ENCODE measurements at regions of chr14 and their contacts with region 1.

Region 1: GRCh38 chr14:30005114-30005808 is 77.6 kb upstream of the PRKD1 start:
- DNase-seq: no peak
- H3K4me3 ChIP-seq: no peak overlapping the region
- H3K27ac ChIP-seq: no peak overlapping the region
- H3K4me1 ChIP-seq: no peaks in the 10 kb centered on the region
- H3K27me3 ChIP-seq: no peaks in the 10 kb centered on the region
- CTCF ChIP-seq: peak; percentile 55 to 68 (median 62)
- EP300 ChIP-seq: no peak
- POLR2A ChIP-seq: no peak

Region 2: GRCh38 chr14:29548948-29549370 is 456.3 kb before region 1 on chr14:
- in situ Hi-C with region 1: loop called in 3 of 4 experiments (anchors 10 kb)
- intact Hi-C with region 1: loop called (anchors 10 kb)
- DNase-seq: no peak
- H3K4me3 ChIP-seq: no peak overlapping the region
- H3K27ac ChIP-seq: no peak overlapping the region
- H3K4me1 ChIP-seq: no peaks in the 10 kb centered on the region
- H3K27me3 ChIP-seq: no peaks in the 10 kb centered on the region
- CTCF ChIP-seq: peak; percentile 32 to 65 (median 54)
- EP300 ChIP-seq: no peak
- POLR2A ChIP-seq: no peak

Region 3: DNA sequence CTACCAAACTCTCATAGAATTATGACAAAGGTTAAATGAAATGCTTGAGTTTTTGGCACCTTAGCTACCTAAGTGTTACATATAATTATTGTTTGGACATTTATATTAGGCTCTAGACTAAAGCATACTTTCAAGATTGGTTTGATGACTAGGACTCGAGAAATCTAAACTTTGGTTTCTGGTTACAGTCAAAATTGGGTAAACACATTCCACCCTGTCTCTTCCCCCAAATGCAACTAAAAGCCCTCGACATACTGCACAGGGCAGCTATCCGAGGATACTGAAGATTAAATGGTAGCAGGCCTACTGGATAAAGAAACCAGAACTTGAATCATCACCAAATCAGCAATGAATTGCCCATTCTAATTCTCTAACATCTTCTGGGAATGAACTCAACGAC is 446.7 kb before region 1 on chr14:
- in situ Hi-C with region 1: loop called in 2 of 4 experiments (anchors 10 kb)
- intact Hi-C with region 1: no loop called
- DNase-seq: no peak
- H3K4me3 ChIP-seq: no peak overlapping the region
- H3K27ac ChIP-seq: peak overlapping the region in 2 of 4 donors; percentile 12 to 41
- H3K4me1 ChIP-seq: peaks cover 0 to 3% (median 0%) of the 10 kb centered on the region in 4 donors
- H3K27me3 ChIP-seq: no peaks in the 10 kb centered on the region
- CTCF ChIP-seq: no peak
- EP300 ChIP-seq: no peak
- POLR2A ChIP-seq: no peak

Region 4: DNA sequence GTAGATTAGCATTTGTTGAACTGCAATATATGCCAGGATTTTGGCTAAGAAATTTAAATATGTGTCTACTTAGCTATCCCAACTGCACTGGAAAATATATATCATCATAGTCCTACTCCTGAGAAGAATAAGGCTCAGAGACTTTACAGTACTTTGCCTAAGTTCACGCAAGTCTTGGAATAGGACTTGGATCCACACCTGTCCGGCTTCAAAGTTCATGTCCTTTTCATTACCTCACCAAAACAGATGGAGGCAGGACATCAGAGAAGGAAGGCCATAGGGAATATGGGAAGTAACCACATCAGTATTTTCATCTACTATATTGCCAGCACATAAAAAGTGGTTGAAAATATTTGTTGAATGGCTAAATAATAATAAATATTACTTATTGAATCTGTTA is 436.1 kb before region 1 on chr14:
- in situ Hi-C with region 1: loop called in 1 of 4 experiments (anchors 10 kb)
- intact Hi-C with region 1: no loop called
- DNase-seq: no peak
- H3K4me3 ChIP-seq: no peak overlapping the region
- H3K27ac ChIP-seq: no peak overlapping the region
- H3K4me1 ChIP-seq: no peaks in the 10 kb centered on the region
- H3K27me3 ChIP-seq: no peaks in the 10 kb centered on the region
- CTCF ChIP-seq: no peak
- EP300 ChIP-seq: no peak
- POLR2A ChIP-seq: no peak

Region 5: DNA sequence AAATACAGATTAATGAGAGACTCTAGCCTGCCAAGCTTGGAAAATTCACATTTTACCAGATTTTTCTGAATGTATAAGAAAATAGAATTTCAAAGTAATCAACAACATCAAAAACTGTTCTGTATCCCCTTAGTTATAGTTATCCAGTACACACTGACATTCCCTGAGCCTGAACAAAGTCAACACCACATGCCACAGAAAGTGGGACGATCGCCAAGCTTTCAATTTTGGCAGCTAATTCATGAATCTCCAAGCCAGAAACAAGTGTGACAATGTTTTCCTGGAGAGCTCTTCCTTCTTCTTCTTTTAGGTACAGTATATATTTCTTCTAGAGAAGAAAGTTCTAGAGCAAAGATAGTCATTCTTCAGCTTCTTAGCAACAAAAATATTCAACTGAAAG is 367.9 kb before region 1 on chr14:
- in situ Hi-C with region 1: no loop called
- intact Hi-C with region 1: no loop called
- DNase-seq: no peak
- H3K4me3 ChIP-seq: no peak overlapping the region
- H3K27ac ChIP-seq: no peak overlapping the region
- H3K4me1 ChIP-seq: peaks cover 0 to 4% (median 0%) of the 10 kb centered on the region in 4 donors
- H3K27me3 ChIP-seq: no peaks in the 10 kb centered on the region
- CTCF ChIP-seq: no peak
- EP300 ChIP-seq: no peak
- POLR2A ChIP-seq: no peak

Region 6: DNA sequence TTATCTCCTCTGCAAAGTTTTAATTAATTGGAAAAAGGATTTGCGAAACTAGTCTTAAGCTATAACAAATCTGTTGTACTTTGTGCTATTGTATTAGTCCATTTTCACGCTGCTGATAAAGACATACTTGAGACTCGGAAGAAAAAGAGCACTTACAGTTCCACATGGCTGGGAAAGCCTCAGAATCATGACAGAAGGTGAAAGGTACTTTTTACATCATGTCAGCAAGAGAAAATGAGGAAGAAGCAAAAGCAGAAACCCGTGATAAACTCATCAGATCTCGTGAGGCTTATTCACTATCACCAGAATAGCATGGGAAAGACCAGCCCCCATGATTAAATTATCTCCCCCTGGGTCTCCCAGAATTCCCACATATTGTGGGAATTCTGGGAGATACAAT is 40.5 kb after region 1 on chr14:
- in situ Hi-C with region 1: no loop called
- intact Hi-C with region 1: no loop called
- DNase-seq: no peak
- H3K4me3 ChIP-seq: no peak overlapping the region
- H3K27ac ChIP-seq: no peak overlapping the region
- H3K4me1 ChIP-seq: no peaks in the 10 kb centered on the region
- H3K27me3 ChIP-seq: no peaks in the 10 kb centered on the region
- CTCF ChIP-seq: no peak
- EP300 ChIP-seq: no peak
- POLR2A ChIP-seq: no peak

Region 7: GRCh38 chr14:30779196-30779595 is 773.9 kb after region 1 on chr14:
- in situ Hi-C with region 1: no loop called
- intact Hi-C with region 1: no loop called
- DNase-seq: no peak
- H3K4me3 ChIP-seq: no peak overlapping the region
- H3K27ac ChIP-seq: no peak overlapping the region
- H3K4me1 ChIP-seq: no peaks in the 10 kb centered on the region
- H3K27me3 ChIP-seq: no peaks in the 10 kb centered on the region
- CTCF ChIP-seq: no peak
- EP300 ChIP-seq: no peak
- POLR2A ChIP-seq: no peak

Measured in transverse colon (tissue), 4 donors.